Activated CD8-positive, alpha-beta T cell treated with anti-CD3 and anti-CD28 coated beads, Interleukin-2, amount 10 ng/mL, durations not matched to agents 7 days and 5 days (primary cell): ENCODE measurements at regions of chr9 and their contacts with region 1.

Region 1: GRCh38 chr9:33076358-33077004 is at the start of gene SMU1:
- DNase-seq: peak; percentile 98
- ATAC-seq: peak; percentile 98
- H3K4me3 Mint-ChIP-seq: peak within 1 kb of the TSS; percentile 98
- H3K27ac Mint-ChIP-seq: peak within 1 kb of the TSS; percentile 100
- H3K4me1 Mint-ChIP-seq: peaks cover 28% of the 10 kb centered on the region
- H3K27me3 Mint-ChIP-seq: no peaks in the 10 kb centered on the region
- total RNA-seq, gene SMU1: 21.7 to 22.6 TPM

Region 2: GRCh38 chr9:33065157-33066076 is 11.1 kb before region 1 on chr9:
- CTCF ChIA-PET with region 1: interaction called, 4 read pairs
- POLR2A ChIA-PET with region 1: interaction called, 13 read pairs
- DNase-seq: no peak
- ATAC-seq: peak; percentile 41
- H3K4me3 Mint-ChIP-seq: no peak overlapping the region
- H3K27ac Mint-ChIP-seq: peak overlapping the region; percentile 64
- H3K4me1 Mint-ChIP-seq: peaks cover 14% of the 10 kb centered on the region
- H3K27me3 Mint-ChIP-seq: no peaks in the 10 kb centered on the region

Region 3: DNA sequence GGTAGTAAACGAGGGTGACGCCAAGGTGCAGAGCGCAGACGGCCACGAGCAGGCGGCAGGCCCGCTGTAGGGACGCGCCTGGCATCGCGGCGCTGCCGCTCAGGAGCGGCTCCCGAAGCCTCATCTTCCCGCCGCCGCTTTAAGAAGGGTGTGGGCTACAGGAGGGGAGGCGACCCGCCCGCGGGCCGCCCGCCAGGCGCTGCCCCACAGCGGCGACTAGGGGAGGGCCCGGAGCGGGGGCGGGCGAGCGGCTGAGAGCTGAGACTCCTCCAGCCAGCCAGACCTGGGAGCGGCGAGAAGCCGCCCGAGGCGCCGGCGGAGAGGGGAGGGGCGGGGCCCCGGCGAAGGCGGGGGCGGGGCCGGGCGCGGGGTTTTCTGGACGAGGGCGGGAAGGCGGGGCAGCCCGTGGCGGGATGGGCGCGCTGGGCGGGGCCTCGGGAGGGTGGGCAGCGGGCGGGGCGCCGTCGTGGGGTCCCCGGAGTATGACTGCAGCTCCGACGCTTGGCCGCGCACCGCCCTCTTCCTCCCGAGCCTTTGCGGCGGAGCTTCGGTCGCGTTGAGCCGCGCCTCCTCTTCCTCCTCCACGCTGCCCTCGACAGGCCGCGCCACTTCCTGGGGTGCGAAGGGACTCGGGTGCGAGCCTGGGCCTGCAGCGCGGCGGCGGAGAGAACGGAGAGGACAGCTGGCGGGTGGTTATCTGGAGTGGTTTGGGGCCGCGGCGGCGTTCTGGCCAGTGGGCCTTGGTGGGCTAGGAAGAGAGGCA is 90.7 kb after region 1 on chr9 and contains the start of gene B4GALT1:
- CTCF ChIA-PET with region 1: interaction called, 23 read pairs
- POLR2A ChIA-PET with region 1: interaction called, 8 read pairs
- DNase-seq: peak; percentile 97
- ATAC-seq: peak; percentile 83
- H3K4me3 Mint-ChIP-seq: peak within 1 kb of the TSS; percentile 93
- H3K27ac Mint-ChIP-seq: peak within 1 kb of the TSS; percentile 99
- H3K4me1 Mint-ChIP-seq: peaks cover 58% of the 10 kb centered on the region
- H3K27me3 Mint-ChIP-seq: no peaks in the 10 kb centered on the region
- total RNA-seq, gene B4GALT1: 27.8 to 28.5 TPM